HepG2 (cell line): ENCODE measurements at regions of chr10 and their contacts with region 1.

Region 1: GRCh38 chr10:99758211-99758891 is 24.1 kb upstream of the ABCC2 start:
- DNase-seq: no peak
- ATAC-seq: no peak
- H3K4me3 ChIP-seq: no peak overlapping the region
- H3K27ac ChIP-seq: no peak overlapping the region
- H3K4me1 ChIP-seq: peaks cover 60% of the 10 kb centered on the region
- H3K27me3 ChIP-seq: no peaks in the 10 kb centered on the region
- CTCF ChIP-seq: no peak
- EP300 ChIP-seq: no peak
- POLR2A ChIP-seq: no peak
- RAD21 ChIP-seq: no peak

Region 2: GRCh38 chr10:99788598-99789256 is 30.4 kb after region 1 on chr10:
- CTCF ChIA-PET with region 1: no interaction called
- POLR2A ChIA-PET with region 1: interaction called, 3 read pairs
- in situ Hi-C with region 1: loop called (anchors 5 kb)
- intact Hi-C with region 1: loop called (anchors 2 kb)
- DNase-seq: no peak
- ATAC-seq: no peak
- H3K4me3 ChIP-seq: peak overlapping the region; percentile 19 to 35 (median 33); a peak in 4 of 6 replicates
- H3K27ac ChIP-seq: peak overlapping the region; percentile 2
- H3K4me1 ChIP-seq: peaks cover 63% of the 10 kb centered on the region
- H3K27me3 ChIP-seq: no peaks in the 10 kb centered on the region; a peak in 1 of 5 replicates
- CTCF ChIP-seq: no peak
- EP300 ChIP-seq: no peak
- POLR2A ChIP-seq: no peak
- RAD21 ChIP-seq: no peak